ENCODE measurements at regions of chr1 and their contacts with region 1.

Region 1: DNA sequence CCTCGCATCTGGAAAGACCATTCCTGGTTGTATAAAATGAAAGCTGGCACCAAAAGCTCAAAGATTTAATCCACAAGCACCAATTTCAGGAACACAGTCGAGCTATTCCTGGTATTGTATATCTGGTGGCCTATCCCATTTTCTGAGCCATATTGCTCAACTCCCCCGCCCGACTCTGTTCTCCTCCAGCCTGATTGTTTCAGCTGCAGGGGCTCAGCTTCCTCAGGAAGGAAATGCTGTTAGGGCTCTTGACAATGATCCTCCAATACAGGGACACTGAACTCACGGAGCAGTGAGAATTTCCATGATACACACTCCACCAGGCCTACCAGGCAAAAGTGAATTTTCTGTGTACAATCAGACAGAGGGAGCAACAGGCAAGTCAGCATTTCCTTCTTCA is 16.9 kb upstream of the TDRD10 start:
- DNase-seq: no peak
- ATAC-seq: no peak
- H3K4me3 ChIP-seq: no peak overlapping the region
- H3K27ac ChIP-seq: no peak overlapping the region
- H3K4me1 ChIP-seq: no peaks in the 10 kb centered on the region
- H3K27me3 ChIP-seq: peaks cover 1 to 3% of the 10 kb centered on the region in 2 experiments; a peak in 1 of 4 replicates
- CTCF ChIP-seq: no peak
- EP300 ChIP-seq: no peak
- POLR2A ChIP-seq: no peak
- RAD21 ChIP-seq: no peak

Region 2: GRCh38 chr1:154553056-154554030 is 68.2 kb after region 1 on chr1:
- CTCF ChIA-PET with region 1: interaction called, 302 read pairs
- POLR2A ChIA-PET with region 1: no interaction called
- RAD21 ChIA-PET with region 1: interaction called, 189 read pairs
- SMC1A ChIA-PET with region 1: interaction called, 151 read pairs
- in situ Hi-C with region 1: loop called (anchors 5 kb)
- intact Hi-C with region 1: no loop called
- DNase-seq: no peak
- ATAC-seq: no peak
- H3K4me3 ChIP-seq: no peak overlapping the region
- H3K27ac ChIP-seq: no peak overlapping the region
- H3K4me1 ChIP-seq: peaks cover 20% of the 10 kb centered on the region
- H3K27me3 ChIP-seq: no peaks in the 10 kb centered on the region
- CTCF ChIP-seq: no peak
- EP300 ChIP-seq: no peak
- POLR2A ChIP-seq: no peak
- RAD21 ChIP-seq: no peak

Measured in GM12878 (cell line).